CD14-positive monocyte (primary cell): ENCODE measurements at regions of chr7 and their contacts with region 1.

Region 1: DNA sequence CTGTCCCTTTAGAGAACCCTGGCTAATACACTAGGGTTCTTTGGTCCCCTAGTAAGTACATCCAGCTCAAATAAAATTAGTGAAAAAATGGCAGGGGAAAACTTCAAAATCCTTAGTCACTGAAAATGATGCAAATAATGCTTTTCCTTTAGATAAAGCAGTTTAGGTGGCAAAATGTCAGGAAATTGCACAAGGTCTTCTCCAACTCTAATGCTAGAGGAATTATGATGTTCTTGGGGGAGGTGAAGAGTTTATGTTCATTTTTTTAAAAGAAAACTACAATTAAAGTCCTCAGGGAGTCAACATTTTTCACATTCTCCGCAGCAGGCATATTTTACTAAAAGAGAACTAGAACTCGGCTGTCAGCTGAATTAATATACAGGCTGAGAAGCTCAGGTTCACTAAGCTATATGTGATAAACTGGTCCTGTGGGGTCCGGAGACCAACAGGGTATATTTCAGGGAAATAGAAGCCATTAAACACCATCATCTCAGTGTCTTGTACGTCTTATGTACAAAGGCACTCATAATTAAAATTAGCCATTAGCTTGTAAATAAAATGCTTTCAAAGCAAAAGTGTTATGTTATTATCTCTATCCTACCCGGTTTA is 1164.7 kb upstream of the AUTS2 start:
- DNase-seq: no peak
- H3K4me3 ChIP-seq: no peak overlapping the region
- H3K4me3 Mint-ChIP-seq: no peak overlapping the region
- H3K27ac ChIP-seq: no peak overlapping the region
- H3K27ac Mint-ChIP-seq: no peak overlapping the region
- H3K4me1 ChIP-seq: no peaks in the 10 kb centered on the region
- H3K4me1 Mint-ChIP-seq: no peaks in the 10 kb centered on the region
- H3K27me3 ChIP-seq: no peaks in the 10 kb centered on the region
- H3K27me3 Mint-ChIP-seq: peaks cover 0 to 2% (median 0%) of the 10 kb centered on the region in 3 donors
- CTCF ChIP-seq: no peak

Region 2: DNA sequence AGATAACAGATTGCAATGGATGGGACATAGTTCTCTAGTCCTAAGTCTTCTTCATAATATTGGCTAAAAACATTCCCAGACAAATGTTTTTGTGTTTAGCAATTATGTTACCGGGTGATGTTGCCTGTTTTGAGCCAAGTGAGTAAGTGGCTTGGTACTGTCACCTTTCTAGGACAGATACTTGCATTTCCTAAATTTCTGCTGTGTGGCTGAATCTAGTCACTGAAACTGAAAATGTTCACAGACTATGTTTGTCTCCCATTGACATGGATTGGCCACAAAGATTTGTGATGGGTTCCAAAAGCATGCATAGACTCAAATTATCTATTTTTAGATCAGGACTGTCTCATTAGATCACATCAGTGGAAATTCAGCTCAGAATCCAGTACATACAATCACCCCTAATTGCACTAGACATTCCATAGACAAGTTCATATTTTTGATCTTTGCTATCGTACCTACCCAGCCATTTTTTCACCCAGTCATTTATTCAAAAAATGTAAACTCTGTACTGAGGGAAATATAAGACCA is 57.4 kb before region 1 on chr7:
- intact Hi-C with region 1: loop called in 1 of 2 experiments (anchors 10 kb)
- DNase-seq: no peak
- H3K4me3 ChIP-seq: no peak overlapping the region
- H3K4me3 Mint-ChIP-seq: no peak overlapping the region
- H3K27ac ChIP-seq: no peak overlapping the region
- H3K27ac Mint-ChIP-seq: no peak overlapping the region
- H3K4me1 ChIP-seq: no peaks in the 10 kb centered on the region
- H3K4me1 Mint-ChIP-seq: no peaks in the 10 kb centered on the region
- H3K27me3 ChIP-seq: no peaks in the 10 kb centered on the region
- H3K27me3 Mint-ChIP-seq: peaks cover 0 to 1% (median 0%) of the 10 kb centered on the region in 3 donors
- CTCF ChIP-seq: no peak

Region 3: DNA sequence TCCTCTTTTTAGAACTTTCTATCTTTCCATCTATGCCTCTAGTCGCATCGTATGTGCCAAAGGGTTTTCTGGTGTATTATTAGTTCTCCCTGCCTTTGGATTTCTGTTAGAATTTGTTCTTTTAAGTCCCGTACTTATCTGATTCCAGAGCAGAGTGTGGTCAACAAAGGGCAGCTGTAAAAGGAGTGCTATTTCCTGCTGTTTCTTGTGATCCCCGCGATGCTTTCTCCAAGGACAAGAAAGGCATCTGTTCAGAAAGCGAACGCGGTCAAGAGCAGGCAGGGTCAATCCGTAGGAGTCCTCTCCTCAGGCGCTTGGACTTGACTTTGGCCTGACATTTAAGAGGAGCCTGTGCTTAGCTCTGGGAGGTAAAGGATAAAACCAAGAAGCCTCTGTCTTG is 12.6 kb after region 1 on chr7:
- intact Hi-C with region 1: no loop called
- DNase-seq: no peak
- H3K4me3 ChIP-seq: no peak overlapping the region
- H3K4me3 Mint-ChIP-seq: no peak overlapping the region
- H3K27ac ChIP-seq: no peak overlapping the region
- H3K27ac Mint-ChIP-seq: no peak overlapping the region
- H3K4me1 ChIP-seq: no peaks in the 10 kb centered on the region
- H3K4me1 Mint-ChIP-seq: no peaks in the 10 kb centered on the region
- H3K27me3 ChIP-seq: no peaks in the 10 kb centered on the region
- H3K27me3 Mint-ChIP-seq: no peaks in the 10 kb centered on the region
- CTCF ChIP-seq: no peak